Activated T-helper 2 cell treated with anti-CD3 and anti-CD28 coated beads, Interferon-gamma antibody, Interleukin-2, Interleukin-4, amounts not matched to agents 10 μg/mL and 5 μg/mL and 100 μg/mL, durations not matched to agents 14 hours and 24 hours and 36 hours (primary cell): ENCODE measurements at regions of chr2 and their contacts with region 1.

Region 1: GRCh38 chr2:113602869-113603466 is 24.1 kb upstream of the RABL2A start:
- DNase-seq: no peak
- H3K4me3 Mint-ChIP-seq: peak overlapping the region; percentile 85
- H3K27ac Mint-ChIP-seq: peak overlapping the region; percentile 93
- H3K4me1 Mint-ChIP-seq: peaks cover 6% of the 10 kb centered on the region
- H3K27me3 Mint-ChIP-seq: no peaks in the 10 kb centered on the region

Region 2: DNA sequence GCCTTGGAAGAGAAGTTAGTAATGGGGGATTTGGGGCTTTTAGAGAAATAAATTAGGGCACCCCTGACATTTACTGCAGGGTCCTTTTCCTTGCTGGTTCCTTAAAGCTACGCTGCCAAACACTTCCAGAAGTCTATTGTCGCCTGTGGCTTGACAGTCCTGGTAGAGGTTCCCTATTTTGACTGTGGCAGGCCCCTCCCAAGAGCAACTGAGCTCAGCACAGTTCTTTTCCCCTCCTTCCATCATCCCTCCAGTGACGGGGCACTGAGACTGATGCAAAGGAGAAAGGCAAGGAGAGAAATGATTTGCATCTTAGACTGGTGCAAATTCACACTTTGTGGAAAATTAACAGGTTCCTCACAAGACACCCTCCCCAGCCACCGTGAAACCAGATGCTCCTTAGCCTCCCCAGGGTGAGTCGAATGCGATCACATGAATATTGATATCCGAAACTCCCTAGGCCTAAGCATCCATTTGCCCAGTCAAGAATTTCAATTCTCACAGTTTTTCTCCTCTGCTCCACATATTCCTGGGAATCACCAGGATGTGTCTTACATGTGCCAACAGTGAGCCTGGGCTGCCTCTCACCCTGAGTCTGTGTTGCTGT is 69.5 kb after region 1 on chr2:
- intact Hi-C with region 1: no loop called
- DNase-seq: no peak
- H3K4me3 Mint-ChIP-seq: no peak overlapping the region
- H3K27ac Mint-ChIP-seq: no peak overlapping the region
- H3K4me1 Mint-ChIP-seq: peaks cover 2% of the 10 kb centered on the region
- H3K27me3 Mint-ChIP-seq: no peaks in the 10 kb centered on the region

Region 3: DNA sequence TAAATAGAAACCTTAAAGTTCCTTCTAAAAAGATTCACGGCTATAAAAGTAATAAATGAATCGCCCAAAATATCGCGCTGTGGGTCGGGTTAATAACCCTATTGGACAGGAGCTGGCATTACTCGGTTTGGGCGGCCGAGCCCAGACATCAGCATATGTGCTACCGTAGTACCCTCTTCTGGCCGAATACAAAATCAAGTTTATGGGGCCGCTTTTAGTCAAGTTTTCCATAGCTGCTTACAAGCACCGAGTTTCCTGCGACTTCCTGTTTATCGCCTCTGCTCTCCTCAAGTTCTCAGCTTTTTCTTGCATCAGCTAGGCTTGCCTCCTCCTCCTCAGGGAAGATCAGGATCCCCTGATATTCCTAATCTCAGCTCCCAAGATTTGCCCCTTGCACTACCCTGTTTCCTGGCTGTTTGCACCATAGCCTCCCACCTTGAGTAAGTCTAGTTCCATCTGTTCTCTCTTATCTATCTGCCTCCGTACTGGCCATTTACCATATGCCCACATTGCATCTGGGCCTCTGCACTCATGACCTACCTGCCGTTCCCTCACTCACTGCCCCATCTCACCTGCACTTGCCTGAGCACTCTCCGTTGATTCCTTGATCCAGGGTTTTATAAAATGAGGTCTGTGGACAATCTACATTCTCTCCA is 97.3 kb after region 1 on chr2:
- intact Hi-C with region 1: loop called (anchors 5 kb)
- DNase-seq: peak; percentile 46
- H3K4me3 Mint-ChIP-seq: peak overlapping the region; percentile 68
- H3K27ac Mint-ChIP-seq: peak overlapping the region; percentile 91
- H3K4me1 Mint-ChIP-seq: peaks cover 24% of the 10 kb centered on the region
- H3K27me3 Mint-ChIP-seq: no peaks in the 10 kb centered on the region